CD8-positive, alpha-beta T cell (primary cell): ENCODE measurements at regions of chr19 and their contacts with region 1.

Region 1: GRCh38 chr19:42423462-42424344 is 3.5 kb downstream of the LIPE start:
- DNase-seq: peak; percentile 87 to 95 (median 93)
- ATAC-seq: peak; percentile 86
- H3K4me3 ChIP-seq: peak overlapping the region; percentile 78 to 87
- H3K4me3 Mint-ChIP-seq: peak overlapping the region; percentile 93
- H3K27ac ChIP-seq: peak overlapping the region; percentile 49 to 74
- H3K27ac Mint-ChIP-seq: peak overlapping the region; percentile 87
- H3K4me1 ChIP-seq: peaks cover 31% of the 10 kb centered on the region
- H3K4me1 Mint-ChIP-seq: peaks cover 41% of the 10 kb centered on the region
- H3K27me3 ChIP-seq: no peaks in the 10 kb centered on the region
- H3K27me3 Mint-ChIP-seq: no peaks in the 10 kb centered on the region
- CTCF ChIP-seq: no peak

Region 2: DNA sequence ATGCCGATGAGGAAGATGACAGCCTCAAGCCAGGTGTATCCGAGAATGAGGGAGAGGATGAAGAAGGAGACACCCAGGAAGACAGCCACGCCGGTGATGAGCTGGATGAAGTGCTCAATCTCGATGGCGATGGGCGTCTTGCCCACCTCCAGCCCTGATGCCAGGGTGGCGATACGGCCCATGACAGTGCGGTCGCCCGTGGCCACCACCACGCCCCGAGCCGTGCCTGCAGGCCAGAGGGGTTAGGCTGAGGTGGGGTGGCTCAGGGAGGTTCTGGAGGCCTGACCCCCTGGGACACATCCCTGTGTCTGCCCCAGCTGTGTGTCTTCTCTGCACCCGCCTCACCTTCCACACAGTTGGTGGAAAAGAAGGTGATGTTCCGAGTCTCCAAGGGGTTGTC is 438.7 kb before region 1 on chr19:
- CTCF ChIA-PET with region 1: no interaction called
- POLR2A ChIA-PET with region 1: no interaction called
- intact Hi-C with region 1: no loop called
- DNase-seq: no peak
- ATAC-seq: no peak
- H3K4me3 ChIP-seq: no peak overlapping the region
- H3K4me3 Mint-ChIP-seq: no peak overlapping the region
- H3K27ac ChIP-seq: no peak overlapping the region
- H3K27ac Mint-ChIP-seq: no peak overlapping the region
- H3K4me1 ChIP-seq: no peaks in the 10 kb centered on the region
- H3K4me1 Mint-ChIP-seq: no peaks in the 10 kb centered on the region
- H3K27me3 ChIP-seq: no peaks in the 10 kb centered on the region
- H3K27me3 Mint-ChIP-seq: no peaks in the 10 kb centered on the region
- CTCF ChIP-seq: no peak

Region 3: DNA sequence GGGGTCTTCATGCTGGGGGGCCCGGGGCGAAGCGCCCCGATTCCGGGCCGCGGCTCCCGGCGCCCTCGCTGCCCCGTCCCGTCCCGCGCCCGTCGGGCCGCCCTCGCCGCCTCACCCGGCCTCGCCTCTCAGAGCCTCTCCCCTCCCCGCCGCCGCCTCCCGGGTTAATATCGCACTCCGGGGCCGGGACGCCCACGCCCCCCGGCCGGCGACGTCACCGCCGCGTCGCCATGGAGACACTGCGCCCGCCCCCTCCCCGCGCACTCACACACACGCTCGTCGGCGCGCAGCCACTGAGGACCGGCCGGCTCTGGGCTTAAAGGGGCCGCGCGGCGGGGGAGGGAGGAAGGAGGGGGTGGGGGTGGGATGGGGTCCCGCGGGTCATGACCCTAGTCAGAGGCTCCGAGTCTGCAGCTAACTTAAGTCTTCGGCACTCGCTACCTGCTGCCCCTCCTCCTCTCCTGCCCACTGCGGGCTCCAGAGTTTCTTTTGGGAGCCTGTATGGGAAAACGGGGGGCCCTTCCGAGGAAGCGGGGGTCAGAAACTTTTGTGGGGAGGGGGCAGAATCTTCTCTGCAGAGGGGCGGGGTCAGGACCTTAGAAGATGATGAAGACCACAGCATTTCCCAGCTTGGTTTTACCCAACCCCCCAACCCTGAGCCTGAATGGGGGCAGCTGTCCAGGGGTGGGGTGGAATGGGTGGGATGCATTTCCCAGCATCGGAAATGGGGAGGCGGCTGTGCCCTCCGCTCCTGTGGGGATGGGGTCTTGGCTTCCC is 168.5 kb before region 1 on chr19 and contains the start of gene ERF:
- CTCF ChIA-PET with region 1: no interaction called
- POLR2A ChIA-PET with region 1: no interaction called
- intact Hi-C with region 1: loop called in 1 of 2 experiments (anchors 5 kb)
- DNase-seq: peak; percentile 89 to 97 (median 93)
- ATAC-seq: peak; percentile 71
- H3K4me3 ChIP-seq: peak within 1 kb of the TSS; percentile 85 to 97
- H3K4me3 Mint-ChIP-seq: peak within 1 kb of the TSS; percentile 86
- H3K27ac ChIP-seq: peak within 1 kb of the TSS; percentile 96 to 97
- H3K27ac Mint-ChIP-seq: peak within 1 kb of the TSS; percentile 87
- H3K4me1 ChIP-seq: peaks cover 36% of the 10 kb centered on the region
- H3K4me1 Mint-ChIP-seq: peaks cover 27% of the 10 kb centered on the region
- H3K27me3 ChIP-seq: no peaks in the 10 kb centered on the region
- H3K27me3 Mint-ChIP-seq: no peaks in the 10 kb centered on the region
- CTCF ChIP-seq: no peak
- total RNA-seq, gene ERF: 92.1 to 95.1 TPM

Region 4: DNA sequence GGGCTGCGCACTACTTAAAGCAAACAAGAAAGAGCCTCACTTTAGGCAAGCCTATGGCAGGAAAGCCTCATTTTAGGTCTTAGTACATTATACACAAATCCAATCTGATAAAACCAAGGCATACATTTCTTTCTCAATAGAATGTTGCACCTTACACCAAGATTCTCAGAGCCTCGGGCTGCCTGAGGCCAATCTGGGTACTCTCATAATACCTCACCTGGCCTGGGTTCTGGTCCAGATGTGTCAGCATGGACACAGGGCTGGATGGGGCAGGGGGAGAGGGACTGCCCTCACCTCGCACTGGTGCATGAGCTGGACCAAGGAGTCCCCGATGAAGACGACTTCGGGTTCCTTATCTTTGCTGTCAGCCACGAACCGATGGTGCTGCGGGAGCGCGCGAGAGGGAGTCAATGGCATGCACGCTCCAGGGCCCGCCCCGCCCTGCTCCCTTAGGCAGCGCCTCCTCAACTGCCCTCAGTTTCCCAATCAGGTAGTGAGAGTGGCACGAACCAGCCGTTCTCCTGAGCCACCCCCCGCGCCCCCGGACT is 122.0 kb before region 1 on chr19 and contains the start of gene PRR19:
- CTCF ChIA-PET with region 1: interaction called, 3 read pairs
- POLR2A ChIA-PET with region 1: no interaction called
- intact Hi-C with region 1: loop called (anchors 1 kb)
- DNase-seq: peak in 1 of 9 experiments; percentile 46
- ATAC-seq: peak; percentile 5
- H3K4me3 ChIP-seq: peak within 1 kb of the TSS; percentile 88 to 89
- H3K4me3 Mint-ChIP-seq: peak within 1 kb of the TSS; percentile 87
- H3K27ac ChIP-seq: peak within 1 kb of the TSS; percentile 37 to 56
- H3K27ac Mint-ChIP-seq: peak within 1 kb of the TSS; percentile 49
- H3K4me1 ChIP-seq: peaks cover 19% of the 10 kb centered on the region
- H3K4me1 Mint-ChIP-seq: peaks cover 28% of the 10 kb centered on the region
- H3K27me3 ChIP-seq: no peaks in the 10 kb centered on the region
- H3K27me3 Mint-ChIP-seq: no peaks in the 10 kb centered on the region
- CTCF ChIP-seq: no peak
- total RNA-seq, gene PRR19: 0.19 TPM in 1 of 2 experiments, not detected in the other

Region 5: GRCh38 chr19:42386974-42387707 is 36.6 kb before region 1 on chr19:
- CTCF ChIA-PET with region 1: no interaction called
- POLR2A ChIA-PET with region 1: no interaction called
- intact Hi-C with region 1: loop called in 1 of 2 experiments (anchors 1 kb)
- DNase-seq: peak; percentile 39 to 76 (median 69)
- ATAC-seq: peak; percentile 97
- H3K4me3 ChIP-seq: peak overlapping the region; percentile 31 to 58
- H3K4me3 Mint-ChIP-seq: peak overlapping the region; percentile 69
- H3K27ac ChIP-seq: no peak overlapping the region
- H3K27ac Mint-ChIP-seq: no peak overlapping the region
- H3K4me1 ChIP-seq: peaks cover 9% of the 10 kb centered on the region
- H3K4me1 Mint-ChIP-seq: peaks cover 6% of the 10 kb centered on the region
- H3K27me3 ChIP-seq: peaks cover 5 to 10% of the 10 kb centered on the region in 2 experiments
- H3K27me3 Mint-ChIP-seq: peaks cover 38% of the 10 kb centered on the region
- CTCF ChIP-seq: peak; percentile 42

Region 6: DNA sequence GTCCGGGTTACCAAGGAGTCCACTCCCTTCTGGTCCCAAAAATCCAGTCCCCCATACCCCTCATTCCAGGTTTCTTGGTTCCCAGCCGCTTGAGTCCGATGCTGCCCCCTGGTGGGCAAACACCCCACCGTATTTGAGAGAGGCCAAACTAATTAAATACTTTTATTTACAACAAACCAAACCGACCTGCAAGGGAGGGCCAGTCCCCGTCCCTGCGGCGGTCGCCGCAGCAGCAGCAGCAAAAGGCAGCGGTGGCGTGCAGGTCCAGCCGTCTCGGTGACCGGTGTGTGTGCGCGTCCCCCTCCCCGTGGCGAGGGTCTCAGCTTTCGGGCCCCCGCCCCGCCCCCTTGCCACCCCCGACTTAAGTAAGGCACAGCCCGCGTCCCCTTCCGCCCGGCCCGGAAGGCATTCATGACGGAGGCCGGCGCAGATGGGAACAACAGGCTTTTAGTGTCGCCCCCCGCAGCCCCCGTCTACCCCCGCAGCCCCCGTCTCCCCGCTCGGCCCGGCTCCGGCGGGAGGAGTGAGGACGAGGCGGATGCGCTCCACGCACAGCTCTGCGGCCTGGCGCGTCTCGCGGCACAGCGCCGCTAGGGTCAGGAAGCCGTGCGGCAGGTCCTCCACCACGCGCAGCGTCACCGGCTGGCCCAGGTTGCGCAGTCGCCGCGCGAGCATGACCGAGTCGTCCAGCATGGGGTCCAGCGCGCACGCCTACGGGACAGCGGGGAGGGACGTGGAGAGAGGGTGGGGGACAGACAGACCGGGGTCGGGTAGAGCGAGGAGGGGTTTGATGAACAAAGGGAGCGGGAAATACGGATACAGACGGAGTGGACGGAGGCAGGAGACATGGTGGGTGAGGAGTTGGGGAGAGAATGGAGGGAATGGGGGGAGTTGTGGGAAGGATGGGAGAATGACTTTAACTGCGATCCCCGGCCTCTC is 22.1 kb before region 1 on chr19:
- CTCF ChIA-PET with region 1: interaction called, 6 read pairs
- POLR2A ChIA-PET with region 1: interaction called, 6 read pairs
- intact Hi-C with region 1: loop called (anchors 1 to 2 kb)
- DNase-seq: peak; percentile 56 to 86 (median 77)
- ATAC-seq: peak; percentile 71
- H3K4me3 ChIP-seq: peak overlapping the region; percentile 47 to 61
- H3K4me3 Mint-ChIP-seq: peak overlapping the region; percentile 85
- H3K27ac ChIP-seq: peak overlapping the region; percentile 25 to 46
- H3K27ac Mint-ChIP-seq: peak overlapping the region; percentile 88
- H3K4me1 ChIP-seq: peaks cover 18% of the 10 kb centered on the region
- H3K4me1 Mint-ChIP-seq: peaks cover 41% of the 10 kb centered on the region
- H3K27me3 ChIP-seq: no peaks in the 10 kb centered on the region
- H3K27me3 Mint-ChIP-seq: no peaks in the 10 kb centered on the region
- CTCF ChIP-seq: peak; percentile 79

Region 7: GRCh38 chr19:42450314-42450934 is 26.7 kb after region 1 on chr19:
- CTCF ChIA-PET with region 1: interaction called, 3 read pairs
- POLR2A ChIA-PET with region 1: interaction called, 3 read pairs
- intact Hi-C with region 1: loop called in 1 of 2 experiments (anchors 1 kb)
- DNase-seq: peak; percentile 57 to 96 (median 76)
- ATAC-seq: peak; percentile 96
- H3K4me3 ChIP-seq: no peak overlapping the region
- H3K4me3 Mint-ChIP-seq: no peak overlapping the region
- H3K27ac ChIP-seq: peak overlapping the region; percentile 57 to 76
- H3K27ac Mint-ChIP-seq: no peak overlapping the region
- H3K4me1 ChIP-seq: peaks cover 11% of the 10 kb centered on the region
- H3K4me1 Mint-ChIP-seq: peaks cover 8% of the 10 kb centered on the region
- H3K27me3 ChIP-seq: no peaks in the 10 kb centered on the region
- H3K27me3 Mint-ChIP-seq: no peaks in the 10 kb centered on the region
- CTCF ChIP-seq: peak; percentile 90

Region 8: DNA sequence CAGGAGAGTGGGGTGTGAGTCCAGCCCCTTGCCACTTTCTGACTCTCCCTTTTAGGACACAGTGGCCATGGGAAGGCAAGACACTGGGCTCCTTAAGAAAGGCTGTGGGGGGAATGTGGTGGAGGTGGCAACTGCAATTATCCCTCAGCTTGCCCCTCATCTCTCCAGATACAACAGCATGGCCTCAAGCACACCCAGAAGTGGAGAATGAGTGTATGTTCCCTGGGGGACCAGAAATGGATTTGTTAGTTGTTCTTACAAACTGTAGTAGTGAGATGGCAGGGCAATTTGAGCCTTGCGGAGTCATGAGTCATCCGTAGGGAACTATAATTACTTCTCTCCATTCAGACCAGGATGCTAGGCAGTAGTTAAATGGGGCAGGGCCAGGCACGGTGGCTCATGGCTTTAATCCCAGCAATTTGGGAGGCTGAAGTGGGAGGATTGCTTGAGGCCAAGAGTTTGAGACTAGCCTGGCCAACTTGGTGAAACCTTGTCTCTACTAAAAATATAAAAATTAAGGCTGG is 44.6 kb after region 1 on chr19:
- CTCF ChIA-PET with region 1: no interaction called
- POLR2A ChIA-PET with region 1: no interaction called
- intact Hi-C with region 1: no loop called
- DNase-seq: no peak
- ATAC-seq: no peak
- H3K4me3 ChIP-seq: no peak overlapping the region
- H3K4me3 Mint-ChIP-seq: no peak overlapping the region
- H3K27ac ChIP-seq: no peak overlapping the region
- H3K27ac Mint-ChIP-seq: no peak overlapping the region
- H3K4me1 ChIP-seq: no peaks in the 10 kb centered on the region
- H3K4me1 Mint-ChIP-seq: peaks cover 4% of the 10 kb centered on the region
- H3K27me3 ChIP-seq: no peaks in the 10 kb centered on the region
- H3K27me3 Mint-ChIP-seq: no peaks in the 10 kb centered on the region
- CTCF ChIP-seq: no peak

Region 9: DNA sequence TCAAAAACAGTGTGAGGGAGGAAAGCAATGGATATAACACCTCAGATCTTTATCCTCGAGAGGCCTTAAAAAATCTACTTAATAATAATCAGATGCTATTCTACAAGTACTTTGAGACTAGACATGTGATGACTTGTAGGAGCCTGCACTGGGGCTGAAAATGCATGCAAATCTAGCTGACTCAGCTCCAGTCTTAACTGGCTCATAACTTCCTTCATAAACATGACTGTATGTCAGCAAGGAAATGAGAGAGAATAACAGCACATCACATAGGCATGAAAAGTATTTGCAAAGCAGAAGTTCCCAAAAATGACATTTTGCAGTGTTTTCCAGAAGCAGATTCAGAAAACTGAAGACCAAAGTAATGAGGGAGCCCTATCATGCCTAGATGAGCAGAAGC is 724.5 kb after region 1 on chr19:
- CTCF ChIA-PET with region 1: no interaction called
- POLR2A ChIA-PET with region 1: no interaction called
- intact Hi-C with region 1: no loop called
- DNase-seq: no peak
- ATAC-seq: no peak
- H3K4me3 ChIP-seq: no peak overlapping the region
- H3K4me3 Mint-ChIP-seq: no peak overlapping the region
- H3K27ac ChIP-seq: no peak overlapping the region
- H3K27ac Mint-ChIP-seq: no peak overlapping the region
- H3K4me1 ChIP-seq: no peaks in the 10 kb centered on the region
- H3K4me1 Mint-ChIP-seq: no peaks in the 10 kb centered on the region
- H3K27me3 ChIP-seq: no peaks in the 10 kb centered on the region
- H3K27me3 Mint-ChIP-seq: peaks cover 23% of the 10 kb centered on the region
- CTCF ChIP-seq: no peak